Calu3 (cell line): ENCODE measurements at regions of chr1 and their contacts with region 1.

Region 1: DNA sequence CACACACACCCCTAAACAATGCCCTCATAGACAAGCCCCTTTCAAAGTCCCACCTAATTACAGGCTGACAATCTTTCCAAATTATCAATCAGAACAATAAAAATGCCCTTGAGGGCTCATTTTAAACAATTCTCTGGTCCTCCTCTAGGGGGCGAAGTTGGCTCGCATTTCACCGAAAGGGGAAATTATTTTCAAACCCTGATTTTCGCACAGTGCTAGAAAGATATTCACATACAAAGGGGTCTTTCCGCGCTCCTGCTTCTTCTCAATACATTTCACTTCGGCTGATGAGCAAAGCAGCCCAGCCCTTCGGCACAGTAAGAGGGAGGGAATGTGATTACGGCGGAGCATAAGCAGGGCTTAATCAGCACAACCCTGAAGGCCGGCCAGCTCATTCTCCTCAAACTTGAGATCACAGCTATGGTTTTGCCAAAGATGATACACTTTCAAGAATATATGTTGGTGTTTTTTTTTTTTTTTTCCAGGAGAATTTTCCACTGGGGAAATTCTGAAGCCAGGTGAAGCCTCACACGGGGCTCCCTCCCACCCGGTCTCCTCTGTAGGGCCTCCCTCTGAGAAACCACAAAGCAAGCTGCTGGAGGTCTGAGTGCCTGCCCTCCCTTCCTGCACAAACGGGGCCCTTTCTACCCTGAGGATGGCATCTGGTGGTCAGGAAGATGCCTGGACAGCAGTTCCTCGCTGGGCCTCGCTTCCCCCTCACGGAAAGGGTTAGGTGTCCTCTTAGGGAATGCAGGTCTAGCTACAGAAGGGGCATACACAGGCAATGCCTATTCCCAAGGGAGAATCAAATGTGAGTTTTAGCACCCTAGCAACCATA is 66.9 kb downstream of the GNG12 start:
- DNase-seq: peak; percentile 60
- H3K4me3 Mint-ChIP-seq: no peak overlapping the region
- H3K27ac Mint-ChIP-seq: no peak overlapping the region
- H3K4me1 Mint-ChIP-seq: peaks cover 32% of the 10 kb centered on the region
- H3K27me3 Mint-ChIP-seq: no peaks in the 10 kb centered on the region
- CTCF ChIP-seq: peak; percentile 60

Region 2: GRCh38 chr1:67814121-67814772 is 47.9 kb after region 1 on chr1:
- CTCF ChIA-PET with region 1: interaction called, 5 read pairs
- intact Hi-C with region 1: loop called (anchors 5 kb)
- DNase-seq: no peak
- H3K4me3 Mint-ChIP-seq: no peak overlapping the region
- H3K27ac Mint-ChIP-seq: peak overlapping the region; percentile 50
- H3K4me1 Mint-ChIP-seq: peaks cover 54% of the 10 kb centered on the region
- H3K27me3 Mint-ChIP-seq: no peaks in the 10 kb centered on the region
- CTCF ChIP-seq: no peak

Region 3: GRCh38 chr1:67832737-67833601 is 66.6 kb after region 1 on chr1 and contains the start of gene GNG12:
- CTCF ChIA-PET with region 1: interaction called, 10 read pairs
- intact Hi-C with region 1: loop called (anchors 2 kb)
- DNase-seq: peak; percentile 84
- H3K4me3 Mint-ChIP-seq: peak within 1 kb of the TSS; percentile 95
- H3K27ac Mint-ChIP-seq: peak within 1 kb of the TSS; percentile 98
- H3K4me1 Mint-ChIP-seq: peaks cover 13% of the 10 kb centered on the region
- H3K27me3 Mint-ChIP-seq: no peaks in the 10 kb centered on the region
- CTCF ChIP-seq: no peak
- total RNA-seq, gene GNG12: 72.2 and 85.6 TPM in 2 replicates

Region 4: DNA sequence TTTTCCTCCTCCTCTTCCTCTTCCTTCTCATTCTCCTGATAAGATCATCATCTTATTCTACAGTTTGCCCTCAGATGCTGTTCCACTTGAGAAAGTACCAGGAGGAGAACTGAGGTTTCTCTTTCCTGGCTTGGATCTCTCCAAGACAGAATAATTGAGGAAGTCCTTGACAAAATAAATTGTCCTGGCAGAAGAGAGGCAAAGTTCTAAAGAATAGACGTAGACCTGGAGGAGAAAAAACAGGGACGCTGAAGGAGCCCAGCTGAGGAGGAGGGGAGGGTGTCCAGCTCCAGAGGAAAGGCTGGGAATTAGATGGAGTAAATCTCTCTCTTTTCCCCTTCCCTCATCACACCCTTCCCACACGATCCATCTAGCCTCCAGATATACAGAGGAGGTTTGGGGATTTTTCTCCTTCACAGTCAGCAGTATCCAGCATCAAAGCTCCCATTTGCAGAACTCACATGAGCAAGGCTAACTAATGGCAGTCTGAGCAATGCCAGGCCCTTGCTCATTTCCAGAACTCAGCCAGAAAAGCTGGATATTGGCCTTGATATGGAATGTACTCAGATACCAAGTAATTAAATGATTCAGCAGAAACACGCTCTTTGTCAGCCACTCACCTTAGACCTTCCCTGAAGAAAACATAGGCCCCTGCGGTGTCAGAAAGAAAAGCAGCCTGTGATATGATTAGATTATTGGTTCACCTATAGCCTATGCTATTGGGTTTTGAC is 72.0 kb after region 1 on chr1:
- CTCF ChIA-PET with region 1: interaction called, 3 read pairs
- intact Hi-C with region 1: loop called (anchors 2 kb)
- DNase-seq: no peak
- H3K4me3 Mint-ChIP-seq: no peak overlapping the region
- H3K27ac Mint-ChIP-seq: no peak overlapping the region
- H3K4me1 Mint-ChIP-seq: peaks cover 30% of the 10 kb centered on the region
- H3K27me3 Mint-ChIP-seq: no peaks in the 10 kb centered on the region
- CTCF ChIP-seq: no peak

Region 5: GRCh38 chr1:68010090-68010489 is 243.7 kb after region 1 on chr1:
- CTCF ChIA-PET with region 1: interaction called, 17 read pairs
- intact Hi-C with region 1: loop called (anchors 5 kb)
- DNase-seq: no peak
- H3K4me3 Mint-ChIP-seq: no peak overlapping the region
- H3K27ac Mint-ChIP-seq: no peak overlapping the region
- H3K4me1 Mint-ChIP-seq: no peaks in the 10 kb centered on the region
- H3K27me3 Mint-ChIP-seq: no peaks in the 10 kb centered on the region
- CTCF ChIP-seq: no peak

Region 6: DNA sequence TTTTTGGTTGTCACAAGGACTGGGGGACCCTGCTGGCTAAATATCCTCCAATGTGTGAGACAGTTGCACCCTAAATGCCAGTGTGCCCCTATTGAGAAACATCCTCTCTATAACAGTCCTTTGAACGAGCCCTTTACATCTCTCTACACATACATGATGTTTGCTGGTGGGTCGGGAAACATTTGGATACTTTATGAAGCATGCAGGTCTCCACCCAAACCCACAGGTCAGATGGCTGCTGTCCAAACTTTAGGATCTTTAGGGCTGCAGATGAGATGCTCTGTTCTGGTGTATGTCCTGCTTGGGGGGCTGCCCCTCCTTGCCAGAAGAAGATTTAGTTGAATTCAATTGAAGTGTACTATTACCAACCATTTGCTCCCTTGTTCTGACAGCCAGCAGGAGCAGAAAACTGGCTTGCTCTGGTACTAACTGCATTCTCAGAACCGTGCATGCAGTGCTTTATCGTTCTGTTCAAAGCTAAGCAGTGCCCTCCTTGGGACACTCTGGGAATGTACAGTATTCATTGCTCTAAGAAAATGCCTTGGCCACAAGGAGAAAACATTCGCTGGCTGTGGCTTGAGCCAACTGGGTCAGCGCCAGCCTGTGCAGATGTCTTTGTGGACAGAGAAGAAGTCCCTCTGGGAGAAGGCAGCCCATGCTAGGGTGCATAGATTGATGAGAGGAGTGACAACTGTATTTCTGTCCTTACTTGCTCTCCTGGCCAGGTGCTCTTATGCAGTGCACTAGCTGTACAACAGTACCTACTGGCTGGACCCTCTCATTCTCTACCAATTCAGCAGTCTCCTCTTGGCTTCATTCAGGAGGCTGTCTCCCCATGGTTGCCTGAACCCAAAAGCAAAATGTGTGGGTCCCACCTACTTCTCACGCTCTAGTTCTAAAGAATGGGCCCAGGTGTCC is 345.4 kb after region 1 on chr1:
- CTCF ChIA-PET with region 1: interaction called, 7 read pairs
- intact Hi-C with region 1: loop called (anchors 2 kb)
- DNase-seq: peak; percentile 59
- H3K4me3 Mint-ChIP-seq: no peak overlapping the region
- H3K27ac Mint-ChIP-seq: no peak overlapping the region
- H3K4me1 Mint-ChIP-seq: peaks cover 23% of the 10 kb centered on the region
- H3K27me3 Mint-ChIP-seq: no peaks in the 10 kb centered on the region
- CTCF ChIP-seq: peak; percentile 24

Region 7: GRCh38 chr1:68454534-68454933 is 688.2 kb after region 1 on chr1:
- CTCF ChIA-PET with region 1: no interaction called
- intact Hi-C with region 1: no loop called
- DNase-seq: no peak
- H3K4me3 Mint-ChIP-seq: no peak overlapping the region
- H3K27ac Mint-ChIP-seq: no peak overlapping the region
- H3K4me1 Mint-ChIP-seq: no peaks in the 10 kb centered on the region
- H3K27me3 Mint-ChIP-seq: no peaks in the 10 kb centered on the region
- CTCF ChIP-seq: no peak